ENCODE measurements at regions of chr2 and their contacts with region 1.

Region 1: GRCh38 chr2:26964446-26965130 is 5.8 kb upstream of the MAPRE3 start:
- DNase-seq: no peak
- H3K4me3 ChIP-seq: no peak overlapping the region
- H3K27ac ChIP-seq: no peak overlapping the region
- H3K4me1 ChIP-seq: peaks cover 0 to 5% (median 4%) of the 10 kb centered on the region in 4 donors
- H3K27me3 ChIP-seq: peaks cover 0 to 34% of the 10 kb centered on the region in 2 donors
- CTCF ChIP-seq: no peak

Region 2: DNA sequence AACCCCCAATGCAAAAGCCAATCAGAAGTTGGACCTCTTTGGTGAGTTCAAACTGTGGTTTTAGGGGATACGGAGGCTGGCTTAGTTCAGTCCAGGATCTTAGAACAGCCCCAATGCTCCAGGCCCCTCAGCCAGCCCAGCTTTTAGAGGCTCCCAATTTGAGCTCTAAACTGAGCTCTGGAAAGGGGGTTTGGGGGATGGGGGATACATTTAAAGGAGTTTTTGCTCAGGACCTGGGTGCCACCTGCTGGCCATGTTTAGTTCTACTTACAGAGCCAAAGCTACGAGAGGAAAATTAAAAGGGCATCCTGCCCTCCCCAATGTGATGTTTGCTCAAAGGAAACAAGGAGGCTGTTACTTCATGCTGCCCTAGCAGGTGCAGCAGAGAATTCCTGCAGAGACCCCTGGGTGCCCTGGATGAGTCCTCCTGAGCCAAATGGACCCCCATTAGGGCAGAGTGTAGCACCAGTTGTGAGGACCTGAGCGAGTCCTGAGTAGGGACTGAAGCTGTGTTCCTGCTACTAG is 52.3 kb after region 1 on chr2:
- intact Hi-C with region 1: loop called (anchors 5 kb)
- DNase-seq: peak in 1 of 2 donors; percentile 64
- H3K4me3 ChIP-seq: no peak overlapping the region
- H3K27ac ChIP-seq: no peak overlapping the region
- H3K4me1 ChIP-seq: peaks cover 0 to 29% (median 14%) of the 10 kb centered on the region in 4 donors
- H3K27me3 ChIP-seq: no peaks in the 10 kb centered on the region
- CTCF ChIP-seq: peak; percentile 61 to 68